Naive thymus-derived CD4-positive, alpha-beta T cell (primary cell): ENCODE measurements at regions of chr1 and their contacts with region 1.

Region 1: GRCh38 chr1:198620951-198621824 is 17.7 kb upstream of the PTPRC start:
- DNase-seq: peak; percentile 25 to 82 (median 76)
- ATAC-seq: peak; percentile 87
- H3K4me3 ChIP-seq: peak overlapping the region; percentile 48
- H3K4me3 Mint-ChIP-seq: peak overlapping the region; percentile 65 to 91 (median 84)
- H3K27ac ChIP-seq: peak overlapping the region; percentile 67
- H3K27ac Mint-ChIP-seq: peak overlapping the region; percentile 89 to 99 (median 96)
- H3K4me1 ChIP-seq: peaks cover 73 to 93% of the 10 kb centered on the region in 2 donors
- H3K4me1 Mint-ChIP-seq: peaks cover 58 to 98% (median 85%) of the 10 kb centered on the region in 7 donors
- H3K27me3 ChIP-seq: no peaks in the 10 kb centered on the region
- H3K27me3 Mint-ChIP-seq: no peaks in the 10 kb centered on the region

Region 2: DNA sequence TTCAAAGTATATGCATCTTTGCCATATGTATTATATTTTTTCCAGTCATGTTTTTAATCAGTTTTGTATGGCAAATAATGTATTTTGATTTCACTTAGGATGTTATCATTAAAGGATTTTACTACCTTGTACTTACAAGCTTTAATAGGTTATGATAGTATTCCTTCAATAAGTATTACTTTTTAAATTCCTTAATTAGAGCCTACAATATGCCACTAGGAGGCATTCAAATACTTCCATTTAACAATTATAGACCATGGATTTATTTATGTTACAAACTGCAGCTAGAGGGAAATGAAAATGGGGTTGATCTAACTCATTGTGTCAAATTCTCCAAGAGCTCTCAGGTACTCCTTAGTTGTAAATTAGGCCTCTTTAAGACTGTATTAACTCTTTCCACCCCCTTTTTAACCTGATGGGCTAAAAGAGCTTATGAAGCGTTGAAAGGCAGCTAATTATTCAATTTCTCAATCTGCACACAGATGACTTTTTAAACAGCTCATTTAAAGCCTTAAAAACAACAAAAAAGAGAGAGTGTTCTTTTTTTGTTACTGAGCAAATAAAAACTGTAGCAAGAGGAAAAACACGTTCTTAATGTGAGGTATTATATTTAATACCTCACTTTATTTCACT is 1002.1 kb before region 1 on chr1:
- CTCF ChIA-PET with region 1: no interaction called
- POLR2A ChIA-PET with region 1: no interaction called
- intact Hi-C with region 1: no loop called
- DNase-seq: peak in 3 of 9 donors; percentile 6 to 22 (median 15)
- ATAC-seq: no peak
- H3K4me3 ChIP-seq: no peak overlapping the region
- H3K4me3 Mint-ChIP-seq: no peak overlapping the region
- H3K27ac ChIP-seq: no peak overlapping the region
- H3K27ac Mint-ChIP-seq: no peak overlapping the region
- H3K4me1 ChIP-seq: no peaks in the 10 kb centered on the region
- H3K4me1 Mint-ChIP-seq: peaks cover 0 to 6% (median 0%) of the 10 kb centered on the region in 7 donors
- H3K27me3 ChIP-seq: no peaks in the 10 kb centered on the region
- H3K27me3 Mint-ChIP-seq: no peaks in the 10 kb centered on the region

Region 3: DNA sequence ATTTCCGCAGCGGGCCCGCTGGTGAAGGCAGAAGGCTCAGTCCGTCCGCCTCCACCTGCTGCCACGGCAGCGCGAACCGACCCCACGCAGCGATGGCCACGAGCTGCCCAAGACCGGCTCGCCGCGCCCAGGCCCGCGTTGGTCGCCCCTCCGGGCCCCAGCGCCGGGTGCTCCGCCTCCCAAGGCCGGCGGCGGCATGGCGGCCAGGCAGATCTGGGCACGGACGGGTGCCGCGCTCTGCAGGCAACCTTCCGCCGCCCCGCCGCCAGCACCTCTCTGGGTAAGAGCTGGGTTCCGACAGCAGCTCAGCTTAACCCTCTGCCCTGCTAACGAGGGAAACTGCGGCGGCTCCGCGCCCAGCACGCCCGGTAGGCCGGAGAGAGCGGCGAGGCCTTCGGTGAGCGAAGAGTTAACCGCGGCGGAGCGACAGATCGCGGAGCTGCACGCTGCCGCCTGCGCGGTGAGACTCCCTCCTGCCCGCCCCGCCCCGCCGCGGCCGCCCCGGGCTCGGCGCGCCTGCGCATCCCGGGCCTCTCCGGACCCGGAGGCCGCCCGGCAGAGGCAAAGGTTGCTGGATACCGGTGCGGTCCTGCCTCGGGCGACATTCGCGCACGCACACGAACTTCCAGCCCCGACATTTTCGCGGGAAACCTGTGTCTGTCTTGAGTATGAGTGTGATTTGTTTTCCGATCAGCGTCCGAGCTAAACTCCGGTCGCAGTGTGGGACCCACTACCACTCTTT is 718.6 kb before region 1 on chr1 and contains the start of gene C1orf53:
- CTCF ChIA-PET with region 1: no interaction called
- POLR2A ChIA-PET with region 1: no interaction called
- intact Hi-C with region 1: loop called in 1 of 2 experiments (anchors 5 kb)
- DNase-seq: peak; percentile 58 to 87 (median 74)
- ATAC-seq: peak; percentile 94
- H3K4me3 ChIP-seq: peak within 1 kb of the TSS; percentile 71
- H3K4me3 Mint-ChIP-seq: peak within 1 kb of the TSS; percentile 79 to 97 (median 92)
- H3K27ac ChIP-seq: peak within 1 kb of the TSS; percentile 50
- H3K27ac Mint-ChIP-seq: peak within 1 kb of the TSS; percentile 7 to 82 (median 79)
- H3K4me1 ChIP-seq: peaks cover 4% of the 10 kb centered on the region in 2 donors
- H3K4me1 Mint-ChIP-seq: peaks cover 6 to 19% (median 14%) of the 10 kb centered on the region in 7 donors
- H3K27me3 ChIP-seq: peaks cover 0 to 23% of the 10 kb centered on the region in 2 donors
- H3K27me3 Mint-ChIP-seq: peaks cover 46 to 68% (median 54%) of the 10 kb centered on the region in 5 donors
- total RNA-seq, gene C1orf53: not detected

Region 4: DNA sequence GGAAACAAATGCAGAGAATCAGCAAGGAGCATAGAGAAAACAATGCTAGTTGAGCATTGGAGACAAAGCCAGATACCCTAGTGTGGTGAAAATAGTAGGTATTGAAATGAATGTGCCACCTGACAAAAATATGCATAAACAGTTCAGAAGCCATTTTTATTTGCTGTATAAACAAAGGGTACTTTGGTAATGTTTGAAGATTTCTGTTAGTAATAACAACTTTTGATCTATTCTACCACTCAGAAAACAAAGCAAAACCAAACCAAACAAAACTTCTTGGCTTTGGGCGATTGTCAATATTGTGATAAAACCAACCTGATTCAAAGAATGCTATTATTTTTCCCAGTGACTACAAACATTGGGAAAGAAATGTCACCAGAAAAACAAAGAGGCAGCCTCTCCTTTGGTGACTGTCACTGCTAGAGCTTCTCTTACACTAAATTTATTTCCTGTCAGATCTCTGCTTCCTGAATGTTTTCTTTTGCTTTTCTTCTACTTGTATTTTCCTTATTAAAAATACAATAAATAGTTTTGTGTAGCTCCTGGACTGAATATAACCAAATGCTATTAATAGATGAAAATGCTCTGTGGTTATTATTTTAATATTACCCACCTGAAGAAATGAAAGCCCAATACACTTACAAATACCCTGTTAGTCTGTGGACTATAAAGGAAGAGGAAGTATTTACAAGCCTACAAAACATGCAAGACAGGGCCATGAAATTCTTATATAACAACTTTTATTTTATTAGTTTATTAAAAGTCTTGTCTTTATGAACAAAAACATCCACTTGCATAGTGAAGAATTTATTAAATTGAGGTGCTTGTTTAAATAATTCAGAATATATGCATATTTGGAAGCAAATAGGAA is 86.4 kb before region 1 on chr1:
- CTCF ChIA-PET with region 1: no interaction called
- POLR2A ChIA-PET with region 1: interaction called, 126 read pairs
- intact Hi-C with region 1: no loop called
- DNase-seq: peak in 1 of 9 donors; percentile 26
- ATAC-seq: peak; percentile 47
- H3K4me3 ChIP-seq: no peak overlapping the region
- H3K4me3 Mint-ChIP-seq: peak overlapping the region; percentile 29 to 83 (median 74)
- H3K27ac ChIP-seq: peak overlapping the region; percentile 65
- H3K27ac Mint-ChIP-seq: peak overlapping the region; percentile 55 to 91 (median 82)
- H3K4me1 ChIP-seq: peaks cover 22 to 48% of the 10 kb centered on the region in 2 donors
- H3K4me1 Mint-ChIP-seq: peaks cover 49 to 96% (median 90%) of the 10 kb centered on the region in 7 donors
- H3K27me3 ChIP-seq: no peaks in the 10 kb centered on the region
- H3K27me3 Mint-ChIP-seq: no peaks in the 10 kb centered on the region

Region 5: DNA sequence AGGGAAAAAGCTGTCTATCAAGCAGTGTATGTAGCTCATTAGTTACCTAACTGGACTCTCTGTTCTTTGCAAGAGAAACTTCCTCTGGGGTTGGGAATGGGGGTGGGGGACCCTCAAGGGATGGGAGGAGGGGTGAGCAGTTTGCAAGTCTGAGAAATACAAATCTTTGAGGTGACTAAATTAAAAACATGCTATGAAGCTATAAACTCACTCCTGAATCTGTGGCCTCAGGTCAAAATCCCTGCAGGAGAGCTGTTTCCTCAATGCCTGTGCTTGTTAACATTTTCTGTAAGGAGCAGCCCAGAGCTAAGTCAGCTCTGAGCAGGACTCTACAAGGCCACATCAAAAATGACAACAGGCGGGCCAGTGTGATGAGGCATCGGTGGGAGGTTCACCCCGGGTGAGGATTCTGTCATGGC is 15.2 kb before region 1 on chr1:
- CTCF ChIA-PET with region 1: interaction called, 20 read pairs
- POLR2A ChIA-PET with region 1: interaction called, 59 read pairs
- intact Hi-C with region 1: no loop called
- DNase-seq: no peak
- ATAC-seq: no peak
- H3K4me3 ChIP-seq: no peak overlapping the region
- H3K4me3 Mint-ChIP-seq: peak overlapping the region in 4 of 10 donors; percentile 3 to 60 (median 32)
- H3K27ac ChIP-seq: no peak overlapping the region
- H3K27ac Mint-ChIP-seq: peak overlapping the region; percentile 25 to 96 (median 76)
- H3K4me1 ChIP-seq: peaks cover 18 to 64% of the 10 kb centered on the region in 2 donors
- H3K4me1 Mint-ChIP-seq: peaks cover 36 to 88% (median 73%) of the 10 kb centered on the region in 7 donors
- H3K27me3 ChIP-seq: no peaks in the 10 kb centered on the region
- H3K27me3 Mint-ChIP-seq: no peaks in the 10 kb centered on the region

Region 6: GRCh38 chr1:198651650-198652400 is 30.6 kb after region 1 on chr1:
- CTCF ChIA-PET with region 1: interaction called, 27 read pairs
- POLR2A ChIA-PET with region 1: interaction called, 54 read pairs
- intact Hi-C with region 1: loop called (anchors 1 to 5 kb)
- DNase-seq: no peak
- ATAC-seq: peak; percentile 34
- H3K4me3 ChIP-seq: peak overlapping the region; percentile 41
- H3K4me3 Mint-ChIP-seq: peak overlapping the region; percentile 77 to 92 (median 84)
- H3K27ac ChIP-seq: peak overlapping the region; percentile 94
- H3K27ac Mint-ChIP-seq: peak overlapping the region; percentile 83 to 98 (median 98)
- H3K4me1 ChIP-seq: peaks cover 62% of the 10 kb centered on the region in 2 donors
- H3K4me1 Mint-ChIP-seq: peaks cover 47 to 93% (median 73%) of the 10 kb centered on the region in 7 donors
- H3K27me3 ChIP-seq: no peaks in the 10 kb centered on the region
- H3K27me3 Mint-ChIP-seq: no peaks in the 10 kb centered on the region

Region 7: DNA sequence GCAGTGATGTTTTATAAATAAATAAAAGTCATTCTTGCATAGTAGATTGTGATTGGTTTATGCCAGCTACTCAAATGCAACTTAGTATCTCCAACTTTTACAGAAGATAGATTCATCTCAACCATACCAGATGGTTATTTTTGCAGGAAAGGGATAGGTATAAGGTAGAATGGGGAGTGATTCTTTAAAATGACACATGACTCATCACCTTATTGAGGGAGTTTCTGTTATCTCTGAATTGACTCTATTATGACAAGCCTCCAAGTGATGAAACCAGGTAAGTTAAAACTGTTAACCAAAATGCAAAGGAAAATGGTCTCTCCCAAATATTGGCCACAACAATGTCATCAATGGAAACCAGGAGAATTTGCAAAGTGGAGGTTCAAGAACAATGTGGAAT is 72.1 kb after region 1 on chr1:
- CTCF ChIA-PET with region 1: interaction called, 4 read pairs
- POLR2A ChIA-PET with region 1: interaction called, 14 read pairs
- intact Hi-C with region 1: no loop called
- DNase-seq: no peak
- ATAC-seq: no peak
- H3K4me3 ChIP-seq: no peak overlapping the region
- H3K4me3 Mint-ChIP-seq: peak overlapping the region; percentile 38 to 73 (median 58)
- H3K27ac ChIP-seq: peak overlapping the region; percentile 18
- H3K27ac Mint-ChIP-seq: peak overlapping the region; percentile 67 to 91 (median 77)
- H3K4me1 ChIP-seq: peaks cover 51 to 61% of the 10 kb centered on the region in 2 donors
- H3K4me1 Mint-ChIP-seq: peaks cover 50 to 94% (median 88%) of the 10 kb centered on the region in 7 donors
- H3K27me3 ChIP-seq: no peaks in the 10 kb centered on the region
- H3K27me3 Mint-ChIP-seq: no peaks in the 10 kb centered on the region